Activated B cell treated with CpG ODN at 0.5 μM for 24 hours (primary cell): ENCODE measurements at regions of chr3 and their contacts with region 1.

Region 1: GRCh38 chr3:141460097-141460704 is 26.6 kb upstream of the RASA2 start:
- DNase-seq: peak; percentile 67
- ATAC-seq: peak; percentile 99
- H3K4me3 Mint-ChIP-seq: no peak overlapping the region
- H3K27ac Mint-ChIP-seq: no peak overlapping the region
- H3K4me1 Mint-ChIP-seq: peaks cover 11% of the 10 kb centered on the region
- H3K27me3 Mint-ChIP-seq: no peaks in the 10 kb centered on the region
- CTCF ChIP-seq: no peak

Region 2: GRCh38 chr3:141477224-141477623 is 17.0 kb after region 1 on chr3:
- CTCF ChIA-PET with region 1: interaction called, 15 read pairs
- POLR2A ChIA-PET with region 1: no interaction called
- intact Hi-C with region 1: loop called (anchors 1 kb)
- DNase-seq: no peak
- ATAC-seq: no peak
- H3K4me3 Mint-ChIP-seq: no peak overlapping the region
- H3K27ac Mint-ChIP-seq: no peak overlapping the region
- H3K4me1 Mint-ChIP-seq: peaks cover 14% of the 10 kb centered on the region
- H3K27me3 Mint-ChIP-seq: no peaks in the 10 kb centered on the region
- CTCF ChIP-seq: no peak

Region 3: GRCh38 chr3:141570068-141570467 is 109.9 kb after region 1 on chr3:
- CTCF ChIA-PET with region 1: interaction called, 240 read pairs
- POLR2A ChIA-PET with region 1: no interaction called
- intact Hi-C with region 1: no loop called
- DNase-seq: no peak
- ATAC-seq: no peak
- H3K4me3 Mint-ChIP-seq: no peak overlapping the region
- H3K27ac Mint-ChIP-seq: no peak overlapping the region
- H3K4me1 Mint-ChIP-seq: peaks cover 4% of the 10 kb centered on the region
- H3K27me3 Mint-ChIP-seq: no peaks in the 10 kb centered on the region
- CTCF ChIP-seq: no peak

Region 4: GRCh38 chr3:141644931-141645330 is 184.7 kb after region 1 on chr3:
- CTCF ChIA-PET with region 1: interaction called, 3 read pairs
- POLR2A ChIA-PET with region 1: no interaction called
- intact Hi-C with region 1: loop called (anchors 1 kb)
- DNase-seq: peak; percentile 43
- ATAC-seq: peak; percentile 70
- H3K4me3 Mint-ChIP-seq: no peak overlapping the region
- H3K27ac Mint-ChIP-seq: no peak overlapping the region
- H3K4me1 Mint-ChIP-seq: no peaks in the 10 kb centered on the region
- H3K27me3 Mint-ChIP-seq: peaks cover 5% of the 10 kb centered on the region
- CTCF ChIP-seq: no peak

Region 5: DNA sequence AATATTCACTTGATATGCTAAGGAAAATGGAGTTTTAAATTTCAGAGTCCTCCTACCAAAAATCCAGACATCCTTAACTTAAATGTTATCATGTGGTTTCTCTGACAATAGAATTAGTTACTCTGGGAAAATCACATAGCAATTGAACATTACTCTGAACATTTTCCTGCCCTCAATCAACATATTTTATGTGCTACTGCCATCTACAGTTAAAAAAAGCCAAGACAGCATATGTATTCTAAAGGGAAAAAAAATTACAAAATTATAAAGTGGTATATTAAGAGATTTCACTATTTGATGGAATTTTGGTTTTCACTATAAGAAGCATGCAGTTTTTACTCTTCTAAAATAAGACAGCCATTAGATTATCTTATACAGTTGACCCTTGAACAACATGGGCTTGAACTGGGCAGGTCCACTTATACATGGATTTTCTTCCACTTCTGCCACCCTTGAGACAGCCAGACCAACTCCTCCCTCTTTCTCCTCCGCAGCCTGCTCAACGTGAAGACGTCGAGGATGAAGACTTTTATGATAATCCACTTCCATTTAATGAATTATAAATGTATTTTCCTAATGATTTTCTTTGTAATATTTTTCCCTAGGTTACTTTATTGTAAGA is 538.6 kb after region 1 on chr3:
- CTCF ChIA-PET with region 1: no interaction called
- POLR2A ChIA-PET with region 1: no interaction called
- intact Hi-C with region 1: loop called (anchors 1 kb)
- DNase-seq: no peak
- ATAC-seq: no peak
- H3K4me3 Mint-ChIP-seq: no peak overlapping the region
- H3K27ac Mint-ChIP-seq: no peak overlapping the region
- H3K4me1 Mint-ChIP-seq: peaks cover 3% of the 10 kb centered on the region
- H3K27me3 Mint-ChIP-seq: no peaks in the 10 kb centered on the region
- CTCF ChIP-seq: no peak